Tibial artery (tissue), 4 donors: ENCODE measurements at regions of chr15 and their contacts with region 1.

Region 1: GRCh38 chr15:31435261-31435911 is 108.8 kb downstream of the KLF13 start:
- DNase-seq: peak; percentile 78 to 86
- H3K4me3 ChIP-seq: peak overlapping the region in 1 of 2 donors; percentile 19
- H3K27ac ChIP-seq: peak overlapping the region; percentile 50 to 57
- H3K4me1 ChIP-seq: peaks cover 0 to 20% (median 12%) of the 10 kb centered on the region in 4 donors
- H3K27me3 ChIP-seq: no peaks in the 10 kb centered on the region
- CTCF ChIP-seq: peak; percentile 62 to 70

Region 2: DNA sequence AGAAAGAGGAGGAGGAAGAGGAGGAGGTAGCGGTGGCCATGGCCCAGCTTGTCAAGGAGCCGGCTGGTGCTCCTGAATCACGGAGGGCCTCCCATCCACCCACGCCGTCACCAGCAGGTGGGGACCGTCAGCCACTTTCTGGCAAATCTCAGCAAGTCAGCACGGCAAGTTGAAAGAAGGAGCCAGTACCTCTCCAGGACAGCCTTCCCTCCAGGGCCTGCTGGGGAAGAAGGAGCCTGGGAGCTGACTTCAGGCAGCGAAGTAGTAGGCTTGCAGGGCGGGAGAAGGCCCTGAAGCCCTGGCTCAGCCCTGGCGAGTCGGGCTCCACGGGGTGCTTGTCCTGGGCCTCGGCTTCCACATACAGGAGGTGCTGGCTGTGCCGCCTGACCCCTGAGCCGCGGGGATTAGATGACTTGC is 234.6 kb before region 1 on chr15:
- intact Hi-C with region 1: loop called (anchors 5 kb)
- DNase-seq: peak; percentile 54 to 76
- H3K4me3 ChIP-seq: no peak overlapping the region
- H3K27ac ChIP-seq: no peak overlapping the region
- H3K4me1 ChIP-seq: no peaks in the 10 kb centered on the region
- H3K27me3 ChIP-seq: peaks cover 0 to 37% of the 10 kb centered on the region in 2 donors
- CTCF ChIP-seq: peak; percentile 48 to 63

Region 3: GRCh38 chr15:31332020-31332680 is 103.2 kb before region 1 on chr15:
- intact Hi-C with region 1: loop called (anchors 5 kb)
- DNase-seq: no peak
- H3K4me3 ChIP-seq: no peak overlapping the region
- H3K27ac ChIP-seq: no peak overlapping the region
- H3K4me1 ChIP-seq: peaks cover 0 to 72% (median 45%) of the 10 kb centered on the region in 4 donors
- H3K27me3 ChIP-seq: no peaks in the 10 kb centered on the region
- CTCF ChIP-seq: no peak

Region 4: GRCh38 chr15:31372635-31373091 is 62.7 kb before region 1 on chr15:
- intact Hi-C with region 1: loop called (anchors 10 kb)
- DNase-seq: peak in 1 of 2 donors; percentile 54
- H3K4me3 ChIP-seq: no peak overlapping the region
- H3K27ac ChIP-seq: peak overlapping the region in 1 of 2 donors; percentile 6
- H3K4me1 ChIP-seq: peaks cover 0 to 42% (median 29%) of the 10 kb centered on the region in 4 donors
- H3K27me3 ChIP-seq: no peaks in the 10 kb centered on the region
- CTCF ChIP-seq: no peak

Region 5: GRCh38 chr15:31488426-31489204 is 53.2 kb after region 1 on chr15:
- intact Hi-C with region 1: loop called (anchors 5 kb)
- DNase-seq: peak; percentile 58 to 91
- H3K4me3 ChIP-seq: no peak overlapping the region
- H3K27ac ChIP-seq: peak overlapping the region; percentile 61 to 72
- H3K4me1 ChIP-seq: peaks cover 0 to 27% (median 24%) of the 10 kb centered on the region in 4 donors
- H3K27me3 ChIP-seq: no peaks in the 10 kb centered on the region
- CTCF ChIP-seq: peak; percentile 91 to 94